Activated T-helper 1 cell treated with anti-CD3 and anti-CD28 coated beads, Interleukin-12 subunit alpha, Interleukin-12 subunit beta, Interleukin-2, Interleukin-4 antibody, amounts not matched to agents 30 ng/mL and 10 ng/mL and 1 ng/mL, durations not matched to agents 14 hours and 24 hours and 36 hours (primary cell): ENCODE measurements at regions of chr12 and their contacts with region 1.

Region 1: GRCh38 chr12:47391566-47391965 is 311.8 kb upstream of the AMIGO2 start:
- DNase-seq: peak; percentile 44
- H3K4me3 Mint-ChIP-seq: peak overlapping the region; percentile 27
- H3K27ac Mint-ChIP-seq: peak overlapping the region; percentile 100
- H3K4me1 Mint-ChIP-seq: peaks cover 89% of the 10 kb centered on the region
- H3K27me3 Mint-ChIP-seq: no peaks in the 10 kb centered on the region

Region 2: DNA sequence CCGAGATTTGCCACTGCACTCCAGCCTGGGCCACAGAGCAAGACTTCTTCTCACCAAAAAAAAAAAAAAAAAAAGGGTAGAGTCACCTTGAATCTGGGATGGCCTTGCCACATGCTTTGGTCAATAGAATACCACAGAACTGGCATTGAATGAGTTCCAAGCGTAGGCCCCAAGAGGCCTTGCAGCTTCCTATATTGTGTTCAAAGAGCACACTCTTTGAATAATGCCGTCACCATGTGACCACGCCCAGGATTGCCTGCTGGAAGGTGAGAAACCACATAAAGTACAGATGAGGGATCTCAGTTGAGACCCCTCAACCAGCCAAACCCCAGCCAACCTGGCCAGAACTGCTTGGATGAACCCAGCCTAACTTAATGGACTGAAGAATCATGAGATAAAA is 72.6 kb before region 1 on chr12:
- intact Hi-C with region 1: no loop called
- DNase-seq: peak; percentile 19
- H3K4me3 Mint-ChIP-seq: no peak overlapping the region
- H3K27ac Mint-ChIP-seq: peak overlapping the region; percentile 40
- H3K4me1 Mint-ChIP-seq: peaks cover 40% of the 10 kb centered on the region
- H3K27me3 Mint-ChIP-seq: no peaks in the 10 kb centered on the region

Region 3: GRCh38 chr12:47377414-47378221 is 13.9 kb before region 1 on chr12:
- intact Hi-C with region 1: loop called (anchors 1 kb)
- DNase-seq: no peak
- H3K4me3 Mint-ChIP-seq: no peak overlapping the region
- H3K27ac Mint-ChIP-seq: peak overlapping the region; percentile 4
- H3K4me1 Mint-ChIP-seq: peaks cover 60% of the 10 kb centered on the region
- H3K27me3 Mint-ChIP-seq: no peaks in the 10 kb centered on the region

Region 4: GRCh38 chr12:47896633-47897032 is 505.1 kb after region 1 on chr12:
- intact Hi-C with region 1: no loop called
- DNase-seq: no peak
- H3K4me3 Mint-ChIP-seq: peak overlapping the region; percentile 15
- H3K27ac Mint-ChIP-seq: peak overlapping the region; percentile 72
- H3K4me1 Mint-ChIP-seq: peaks cover 96% of the 10 kb centered on the region
- H3K27me3 Mint-ChIP-seq: no peaks in the 10 kb centered on the region